Transverse colon (tissue), 4 donors: ENCODE measurements at regions of chr11 and their contacts with region 1.

Region 1: GRCh38 chr11:35182317-35182939 is 43.5 kb downstream of the CD44 start:
- DNase-seq: no peak
- H3K4me3 ChIP-seq: no peak overlapping the region
- H3K27ac ChIP-seq: peak overlapping the region in 3 of 4 donors; percentile 4 to 25 (median 21)
- H3K4me1 ChIP-seq: peaks cover 24 to 52% (median 30%) of the 10 kb centered on the region in 4 donors
- H3K27me3 ChIP-seq: no peaks in the 10 kb centered on the region
- CTCF ChIP-seq: no peak
- EP300 ChIP-seq: no peak
- POLR2A ChIP-seq: no peak

Region 2: GRCh38 chr11:34464591-34465051 is 717.8 kb before region 1 on chr11:
- in situ Hi-C with region 1: no loop called
- intact Hi-C with region 1: loop called (anchors 5 kb)
- DNase-seq: no peak
- H3K4me3 ChIP-seq: no peak overlapping the region
- H3K27ac ChIP-seq: no peak overlapping the region
- H3K4me1 ChIP-seq: no peaks in the 10 kb centered on the region
- H3K27me3 ChIP-seq: no peaks in the 10 kb centered on the region
- CTCF ChIP-seq: no peak
- EP300 ChIP-seq: no peak
- POLR2A ChIP-seq: no peak

Region 3: DNA sequence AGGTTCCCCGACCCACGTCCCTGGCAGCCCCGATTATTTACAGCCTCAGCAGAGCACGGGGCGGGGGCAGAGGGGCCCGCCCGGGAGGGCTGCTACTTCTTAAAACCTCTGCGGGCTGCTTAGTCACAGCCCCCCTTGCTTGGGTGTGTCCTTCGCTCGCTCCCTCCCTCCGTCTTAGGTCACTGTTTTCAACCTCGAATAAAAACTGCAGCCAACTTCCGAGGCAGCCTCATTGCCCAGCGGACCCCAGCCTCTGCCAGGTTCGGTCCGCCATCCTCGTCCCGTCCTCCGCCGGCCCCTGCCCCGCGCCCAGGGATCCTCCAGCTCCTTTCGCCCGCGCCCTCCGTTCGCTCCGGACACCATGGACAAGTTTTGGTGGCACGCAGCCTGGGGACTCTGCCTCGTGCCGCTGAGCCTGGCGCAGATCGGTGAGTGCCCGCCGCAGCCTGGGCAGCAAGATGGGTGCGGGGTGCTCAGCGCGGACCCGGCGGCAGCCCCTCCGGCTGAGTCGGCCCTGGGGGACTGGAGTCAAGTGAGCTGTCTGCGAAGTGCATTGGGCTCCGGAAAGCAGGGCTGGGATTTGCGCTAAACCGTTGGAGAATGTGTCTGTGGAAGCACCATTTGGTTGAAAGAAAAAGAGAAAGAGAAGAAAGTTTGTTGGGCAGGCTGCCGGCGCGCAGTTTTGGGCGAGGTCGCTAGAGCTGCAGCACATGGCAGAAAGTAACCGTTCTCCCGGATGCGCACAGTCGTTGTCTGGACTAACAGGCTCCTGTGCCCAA is 43.3 kb before region 1 on chr11 and contains the start of gene CD44:
- in situ Hi-C with region 1: no loop called
- intact Hi-C with region 1: loop called (anchors 2 kb)
- DNase-seq: peak; percentile 86
- H3K4me3 ChIP-seq: peak within 1 kb of the TSS; percentile 64 to 83 (median 69)
- H3K27ac ChIP-seq: peak within 1 kb of the TSS; percentile 85 to 95 (median 92)
- H3K4me1 ChIP-seq: peaks cover 15 to 52% (median 40%) of the 10 kb centered on the region in 4 donors
- H3K27me3 ChIP-seq: no peaks in the 10 kb centered on the region
- CTCF ChIP-seq: no peak
- EP300 ChIP-seq: no peak
- POLR2A ChIP-seq: peak; percentile 76
- total RNA-seq, gene CD44: 56.3 to 182 (median 114) TPM

Region 4: DNA sequence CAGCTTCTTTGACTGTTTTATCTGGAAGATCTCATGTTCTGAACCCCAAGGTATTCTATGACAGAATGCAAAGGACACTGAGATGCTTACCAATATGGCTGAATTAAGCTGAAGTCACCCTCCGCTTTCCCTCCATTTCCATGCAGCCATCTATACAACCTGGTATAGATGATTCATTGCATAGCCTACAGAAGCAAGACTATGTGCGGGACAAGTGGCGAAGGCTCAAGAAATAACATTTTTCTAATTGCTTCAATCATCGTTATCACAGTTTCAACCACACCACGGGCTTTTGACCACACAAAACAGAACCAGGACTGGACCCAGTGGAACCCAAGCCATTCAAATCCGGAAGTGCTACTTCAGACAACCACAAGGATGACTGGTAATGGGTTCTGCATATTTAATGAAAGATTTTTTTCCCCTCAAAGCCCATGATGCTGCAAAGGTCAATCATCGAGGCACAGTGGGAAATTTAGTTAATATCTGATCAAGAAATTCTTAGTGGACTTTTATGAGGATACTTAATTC is 18.4 kb after region 1 on chr11:
- in situ Hi-C with region 1: no loop called
- intact Hi-C with region 1: loop called (anchors 1 kb)
- DNase-seq: no peak
- H3K4me3 ChIP-seq: no peak overlapping the region
- H3K27ac ChIP-seq: no peak overlapping the region
- H3K4me1 ChIP-seq: no peaks in the 10 kb centered on the region
- H3K27me3 ChIP-seq: no peaks in the 10 kb centered on the region
- CTCF ChIP-seq: no peak
- EP300 ChIP-seq: no peak
- POLR2A ChIP-seq: no peak

Region 5: DNA sequence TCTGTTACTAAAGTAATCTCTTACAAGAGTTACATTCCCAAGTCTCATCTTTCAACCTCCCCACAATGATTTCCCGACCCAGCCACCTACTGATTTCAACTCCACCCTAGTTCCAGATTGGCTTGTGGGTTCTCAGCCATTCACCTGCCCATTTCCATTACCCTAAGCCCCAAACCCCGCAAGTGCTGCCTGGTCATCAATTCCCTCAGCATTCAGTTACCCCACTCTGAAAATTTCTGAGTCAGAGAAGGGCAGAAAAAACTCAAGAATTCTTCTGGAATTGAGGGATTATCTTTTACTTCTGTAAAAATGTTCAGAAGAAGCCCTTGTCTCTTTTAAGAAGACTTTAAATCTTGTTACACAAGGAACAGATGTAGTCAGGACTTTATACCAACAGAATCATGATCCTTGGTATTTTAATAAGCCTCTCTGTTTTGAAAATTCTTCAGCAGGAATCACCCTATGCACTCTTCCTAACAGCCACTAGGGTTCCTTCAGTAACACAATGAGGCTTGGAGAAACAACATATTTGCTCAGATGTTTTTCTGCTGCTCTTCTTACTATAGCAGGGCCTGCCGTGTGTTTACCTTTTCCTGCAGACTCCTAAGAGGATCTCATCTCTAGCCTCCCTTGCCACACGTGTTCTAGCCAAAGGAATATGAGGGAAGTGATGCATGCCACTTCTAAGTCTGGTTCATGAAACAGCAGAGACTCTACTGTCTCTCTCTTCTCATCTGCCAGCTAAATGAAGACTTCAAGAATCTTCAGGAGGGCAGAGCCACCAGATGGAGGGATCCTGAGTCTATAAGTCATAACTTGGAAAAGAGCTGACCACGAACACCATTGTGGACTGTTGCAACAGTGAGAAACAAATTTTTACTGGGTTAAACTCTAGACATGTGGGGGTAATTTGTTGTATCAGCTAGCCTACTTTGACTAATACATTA is 372.3 kb after region 1 on chr11:
- in situ Hi-C with region 1: no loop called
- intact Hi-C with region 1: no loop called
- DNase-seq: no peak
- H3K4me3 ChIP-seq: no peak overlapping the region
- H3K27ac ChIP-seq: no peak overlapping the region
- H3K4me1 ChIP-seq: no peaks in the 10 kb centered on the region
- H3K27me3 ChIP-seq: no peaks in the 10 kb centered on the region
- CTCF ChIP-seq: peak in 2 of 5 experiments; percentile 10 to 16
- EP300 ChIP-seq: no peak
- POLR2A ChIP-seq: no peak

Region 6: GRCh38 chr11:35905646-35906276 is 723.3 kb after region 1 on chr11:
- in situ Hi-C with region 1: no loop called
- intact Hi-C with region 1: no loop called
- DNase-seq: no peak
- H3K4me3 ChIP-seq: no peak overlapping the region
- H3K27ac ChIP-seq: peak overlapping the region in 1 of 4 donors; percentile 4
- H3K4me1 ChIP-seq: peaks cover 0 to 22% (median 6%) of the 10 kb centered on the region in 4 donors
- H3K27me3 ChIP-seq: peaks cover 8% of the 10 kb centered on the region
- CTCF ChIP-seq: no peak
- EP300 ChIP-seq: no peak
- POLR2A ChIP-seq: no peak